CD8-positive, alpha-beta T cell (primary cell): ENCODE measurements at regions of chr2 and their contacts with region 1.

Region 1: DNA sequence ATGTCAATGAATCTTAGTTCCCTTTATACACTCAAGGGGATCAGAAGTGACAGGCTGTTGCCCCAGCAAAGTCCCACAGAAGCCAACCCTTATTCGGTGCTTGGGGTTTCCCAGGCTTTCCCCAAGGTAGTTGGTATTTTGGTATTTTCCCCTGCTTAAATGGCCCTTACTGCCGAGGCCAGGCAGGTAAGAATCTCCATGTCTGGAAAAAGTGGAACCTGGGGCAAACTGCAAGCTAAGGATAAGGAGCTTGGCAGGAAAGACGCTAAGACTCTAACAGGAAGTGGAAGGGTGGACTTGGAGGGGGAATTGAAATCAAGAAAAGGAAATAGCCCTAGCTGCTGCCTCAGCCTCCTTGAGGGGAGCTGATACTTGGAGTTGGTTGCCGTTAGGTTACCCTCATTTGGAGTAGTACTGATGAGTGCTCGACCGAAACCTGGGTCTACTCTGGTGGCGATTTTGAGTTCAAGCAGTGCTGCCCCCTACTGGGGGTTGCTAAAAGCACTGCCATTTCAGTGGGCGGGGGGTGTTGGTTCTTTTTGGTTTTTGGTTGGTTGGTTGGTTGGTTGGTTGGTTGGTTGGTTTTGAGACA is 3.3 kb upstream of the GPBAR1 start:
- DNase-seq: peak; percentile 37 to 84 (median 66)
- ATAC-seq: peak; percentile 85
- H3K4me3 ChIP-seq: no peak overlapping the region
- H3K4me3 Mint-ChIP-seq: peak overlapping the region; percentile 56
- H3K27ac ChIP-seq: peak overlapping the region in 1 of 2 experiments; percentile 72
- H3K27ac Mint-ChIP-seq: peak overlapping the region; percentile 80
- H3K4me1 ChIP-seq: peaks cover 9% of the 10 kb centered on the region
- H3K4me1 Mint-ChIP-seq: peaks cover 23% of the 10 kb centered on the region
- H3K27me3 ChIP-seq: no peaks in the 10 kb centered on the region
- H3K27me3 Mint-ChIP-seq: no peaks in the 10 kb centered on the region
- CTCF ChIP-seq: peak; percentile 48

Region 2: DNA sequence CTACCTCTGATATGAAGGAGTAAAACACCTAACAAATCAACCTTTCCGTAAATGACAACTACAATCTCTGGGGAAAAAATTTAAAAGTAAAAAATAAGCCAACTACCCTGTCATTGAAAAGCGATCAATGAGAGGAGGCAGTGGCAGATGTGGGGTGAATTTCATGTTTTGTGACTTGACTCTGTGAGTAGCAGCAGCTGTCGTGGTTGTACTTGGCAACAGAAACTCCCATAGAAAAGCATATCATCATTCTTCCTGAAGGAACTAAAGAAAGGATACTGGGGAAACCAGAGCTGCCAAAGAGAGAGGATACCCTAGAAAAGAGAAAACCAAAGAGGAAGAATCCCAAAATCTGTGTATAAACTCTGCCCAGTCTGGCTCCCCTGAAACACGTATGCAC is 491.1 kb before region 1 on chr2:
- CTCF ChIA-PET with region 1: no interaction called
- POLR2A ChIA-PET with region 1: no interaction called
- intact Hi-C with region 1: no loop called
- DNase-seq: no peak
- ATAC-seq: no peak
- H3K4me3 ChIP-seq: no peak overlapping the region
- H3K4me3 Mint-ChIP-seq: no peak overlapping the region
- H3K27ac ChIP-seq: no peak overlapping the region
- H3K27ac Mint-ChIP-seq: no peak overlapping the region
- H3K4me1 ChIP-seq: no peaks in the 10 kb centered on the region
- H3K4me1 Mint-ChIP-seq: no peaks in the 10 kb centered on the region
- H3K27me3 ChIP-seq: no peaks in the 10 kb centered on the region
- H3K27me3 Mint-ChIP-seq: peaks cover 2% of the 10 kb centered on the region
- CTCF ChIP-seq: no peak

Region 3: GRCh38 chr2:218223046-218223445 is 34.4 kb before region 1 on chr2:
- CTCF ChIA-PET with region 1: interaction called, 4 read pairs
- POLR2A ChIA-PET with region 1: interaction called, 4 read pairs
- intact Hi-C with region 1: loop called (anchors 5 kb)
- DNase-seq: peak in 5 of 9 experiments; percentile 27 to 61 (median 43)
- ATAC-seq: peak; percentile 65
- H3K4me3 ChIP-seq: peak overlapping the region in 1 of 2 experiments; percentile 6
- H3K4me3 Mint-ChIP-seq: peak overlapping the region; percentile 71
- H3K27ac ChIP-seq: peak overlapping the region in 1 of 2 experiments; percentile 99
- H3K27ac Mint-ChIP-seq: peak overlapping the region; percentile 92
- H3K4me1 ChIP-seq: peaks cover 79% of the 10 kb centered on the region
- H3K4me1 Mint-ChIP-seq: peaks cover 88% of the 10 kb centered on the region
- H3K27me3 ChIP-seq: no peaks in the 10 kb centered on the region
- H3K27me3 Mint-ChIP-seq: no peaks in the 10 kb centered on the region
- CTCF ChIP-seq: no peak

Region 4: DNA sequence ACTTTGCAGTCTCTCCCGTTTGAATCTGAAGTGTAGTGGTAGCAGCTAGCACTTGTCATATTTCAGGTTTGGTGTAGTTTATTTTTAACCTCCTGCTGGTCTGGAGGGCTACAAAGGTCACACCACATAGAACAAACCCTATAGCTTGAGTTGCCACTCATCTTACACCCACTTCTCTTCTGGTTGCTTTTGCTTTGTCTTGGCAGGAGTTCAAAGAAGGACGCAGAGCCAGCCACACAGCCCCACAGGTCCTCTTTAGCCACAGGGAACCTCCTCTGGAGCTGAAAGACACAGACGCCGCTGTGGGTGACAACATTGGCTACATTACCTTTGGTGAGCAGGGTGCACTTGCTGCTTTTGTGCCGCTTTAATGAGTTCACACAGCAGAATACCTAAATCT is 12.3 kb before region 1 on chr2:
- CTCF ChIA-PET with region 1: interaction called, 11 read pairs
- POLR2A ChIA-PET with region 1: interaction called, 3 read pairs
- intact Hi-C with region 1: no loop called
- DNase-seq: peak in 1 of 9 experiments; percentile 33
- ATAC-seq: peak; percentile 44
- H3K4me3 ChIP-seq: no peak overlapping the region
- H3K4me3 Mint-ChIP-seq: no peak overlapping the region
- H3K27ac ChIP-seq: peak overlapping the region in 1 of 2 experiments; percentile 23
- H3K27ac Mint-ChIP-seq: peak overlapping the region; percentile 63
- H3K4me1 ChIP-seq: peaks cover 35% of the 10 kb centered on the region
- H3K4me1 Mint-ChIP-seq: peaks cover 41% of the 10 kb centered on the region
- H3K27me3 ChIP-seq: no peaks in the 10 kb centered on the region
- H3K27me3 Mint-ChIP-seq: no peaks in the 10 kb centered on the region
- CTCF ChIP-seq: no peak